ENCODE measurements at regions of chr9 and their contacts with region 1.

Region 1: DNA sequence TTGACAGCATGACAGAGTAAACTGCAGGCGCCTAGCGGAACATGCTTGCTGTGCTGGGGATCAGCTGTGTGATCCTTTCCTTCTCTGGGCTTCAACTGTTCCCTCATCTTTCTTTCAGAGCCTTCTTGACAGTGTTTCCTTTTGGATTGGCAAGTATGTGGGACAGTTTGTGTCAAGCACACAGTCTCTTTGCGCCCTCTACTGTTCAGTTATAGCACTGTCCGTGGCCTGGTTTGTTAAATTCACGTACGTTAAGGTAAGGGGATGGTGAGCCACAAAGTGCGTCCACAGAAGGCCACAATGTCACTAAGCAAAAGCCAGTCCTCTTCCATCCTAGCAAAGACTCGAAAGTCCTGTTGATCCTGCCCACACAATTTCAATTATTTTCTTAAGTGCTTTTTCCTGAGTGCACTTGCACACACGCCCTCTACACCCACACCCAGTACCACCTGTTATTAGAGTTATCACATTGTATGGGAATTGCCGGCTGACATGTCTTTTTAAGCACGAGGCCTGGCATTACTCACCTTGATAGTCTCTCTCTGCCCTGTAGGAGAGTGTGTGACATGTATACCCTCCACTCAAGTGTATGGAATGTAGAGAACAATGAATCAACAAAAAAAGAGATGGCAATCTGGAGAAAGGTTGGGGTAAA is 22.5 kb upstream of the PTPN3 start:
- DNase-seq: peak; percentile 56
- ATAC-seq: peak; percentile 85 to 92

Region 2: DNA sequence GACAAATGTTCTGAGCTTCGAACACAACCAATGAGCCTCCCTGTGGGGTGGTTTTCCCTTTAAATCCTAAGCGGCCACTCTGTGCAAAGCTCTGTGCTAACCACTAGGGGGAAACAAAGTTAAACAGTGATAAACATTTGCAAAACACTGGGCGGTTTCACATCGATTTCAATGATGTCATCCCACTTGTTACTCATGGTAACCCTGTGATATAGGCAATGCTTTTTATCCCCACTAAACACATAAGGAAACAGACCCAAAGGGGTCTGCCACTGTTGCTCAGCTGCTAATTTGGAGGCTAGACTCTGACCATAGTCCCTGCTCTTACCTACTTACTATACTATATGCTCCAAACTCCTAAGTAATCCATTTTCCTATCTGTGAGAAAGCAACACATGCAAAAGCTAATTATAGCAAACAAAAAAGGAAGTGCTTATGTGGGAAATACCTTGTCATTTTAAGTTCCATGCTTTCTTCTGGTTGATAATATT is 79.8 kb before region 1 on chr9:
- intact Hi-C with region 1: loop called (anchors 5 kb)
- DNase-seq: peak; percentile 39
- ATAC-seq: peak; percentile 73 to 87

Region 3: DNA sequence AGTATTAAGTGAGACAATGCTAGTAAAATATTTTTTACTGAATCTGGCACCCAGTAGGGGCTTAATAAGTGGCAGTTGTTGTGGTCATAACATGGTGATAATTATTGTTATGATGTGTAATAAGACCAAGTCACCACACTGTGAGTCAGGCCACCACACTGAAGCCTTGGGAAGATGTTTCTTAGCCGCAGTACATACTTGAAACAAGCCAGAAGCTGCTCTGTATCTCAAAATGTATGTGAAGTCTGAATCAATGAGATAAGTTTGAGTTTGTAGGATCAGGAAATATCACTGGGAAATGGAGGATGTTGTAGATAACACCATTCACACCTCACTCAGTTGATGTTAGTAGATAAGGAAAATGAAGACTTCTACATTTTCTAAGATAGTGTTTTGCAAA is 28.8 kb after region 1 on chr9:
- intact Hi-C with region 1: no loop called
- DNase-seq: no peak
- ATAC-seq: no peak

Region 4: DNA sequence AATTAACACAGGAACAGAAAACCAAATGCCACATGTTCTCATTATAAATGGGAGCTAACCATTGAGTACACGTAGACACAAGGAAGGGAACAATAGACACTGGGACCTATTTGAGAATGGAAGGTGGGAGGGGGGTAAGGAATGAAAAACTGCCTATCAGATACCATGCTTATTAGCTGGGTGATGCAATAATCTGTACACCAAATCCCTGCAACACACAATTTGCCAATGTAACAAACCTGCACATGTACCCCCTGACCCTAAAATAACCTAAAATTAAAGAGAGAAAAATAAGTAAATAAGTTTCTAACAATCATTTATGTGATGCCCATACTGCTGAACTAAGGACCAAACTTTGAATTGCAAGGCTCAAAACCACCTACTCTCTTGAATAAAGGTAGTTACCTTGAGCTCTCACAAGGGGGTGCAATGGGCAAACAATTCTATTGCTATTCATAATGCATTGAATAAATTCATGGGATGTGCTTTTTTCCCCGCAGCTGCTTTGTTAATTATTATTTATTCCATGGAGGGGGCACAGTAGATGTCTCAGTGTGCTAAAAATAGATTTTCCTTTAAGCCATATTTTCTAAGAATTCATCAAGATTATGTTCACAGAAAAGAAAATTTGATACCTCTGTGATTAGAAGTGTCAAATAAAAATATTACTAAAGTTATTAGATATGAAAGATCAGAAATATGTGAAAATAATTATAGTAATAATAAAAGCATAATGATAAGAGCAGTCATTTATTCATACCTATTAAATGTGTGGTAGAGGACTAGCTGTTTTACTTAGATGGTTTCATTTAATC is 53.7 kb after region 1 on chr9:
- intact Hi-C with region 1: no loop called
- DNase-seq: no peak
- ATAC-seq: peak; percentile 65 to 71